Motor neuron (in vitro differentiated cells): ENCODE measurements at regions of chr7 and their contacts with region 1.

Region 1: GRCh38 chr7:92025260-92025659 is 84.6 kb downstream of the AKAP9 start:
- ATAC-seq: peak in 2 of 8 experiments; percentile 69 to 71
- H3K4me3 ChIP-seq: no peak overlapping the region
- H3K27ac ChIP-seq: no peak overlapping the region
- H3K4me1 ChIP-seq: no peaks in the 10 kb centered on the region

Region 2: GRCh38 chr7:91880413-91881241 is 144.6 kb before region 1 on chr7 and contains the start of gene MTERF1:
- in situ Hi-C with region 1: loop called in 1 of 9 experiments (anchors 25 kb)
- ATAC-seq: peak; percentile 95 to 99 (median 98)
- H3K4me3 ChIP-seq: peak within 1 kb of the TSS; percentile 56 to 75 (median 67)
- H3K27ac ChIP-seq: no peak within 1 kb of the TSS
- H3K4me1 ChIP-seq: peaks cover 0 to 7% of the 10 kb centered on the region in 2 donors
- total RNA-seq, gene MTERF1: 12.3 to 22.3 (median 15.8) TPM

Region 3: GRCh38 chr7:92158660-92159575 is 133.7 kb after region 1 on chr7:
- in situ Hi-C with region 1: no loop called
- ATAC-seq: peak in 2 of 8 experiments; percentile 28 to 39
- H3K4me3 ChIP-seq: no peak overlapping the region
- H3K27ac ChIP-seq: no peak overlapping the region
- H3K4me1 ChIP-seq: no peaks in the 10 kb centered on the region